Dorsolateral prefrontal cortex (tissue), 120 donors: ENCODE measurements at regions of chr10 and their contacts with region 1.

Region 1: DNA sequence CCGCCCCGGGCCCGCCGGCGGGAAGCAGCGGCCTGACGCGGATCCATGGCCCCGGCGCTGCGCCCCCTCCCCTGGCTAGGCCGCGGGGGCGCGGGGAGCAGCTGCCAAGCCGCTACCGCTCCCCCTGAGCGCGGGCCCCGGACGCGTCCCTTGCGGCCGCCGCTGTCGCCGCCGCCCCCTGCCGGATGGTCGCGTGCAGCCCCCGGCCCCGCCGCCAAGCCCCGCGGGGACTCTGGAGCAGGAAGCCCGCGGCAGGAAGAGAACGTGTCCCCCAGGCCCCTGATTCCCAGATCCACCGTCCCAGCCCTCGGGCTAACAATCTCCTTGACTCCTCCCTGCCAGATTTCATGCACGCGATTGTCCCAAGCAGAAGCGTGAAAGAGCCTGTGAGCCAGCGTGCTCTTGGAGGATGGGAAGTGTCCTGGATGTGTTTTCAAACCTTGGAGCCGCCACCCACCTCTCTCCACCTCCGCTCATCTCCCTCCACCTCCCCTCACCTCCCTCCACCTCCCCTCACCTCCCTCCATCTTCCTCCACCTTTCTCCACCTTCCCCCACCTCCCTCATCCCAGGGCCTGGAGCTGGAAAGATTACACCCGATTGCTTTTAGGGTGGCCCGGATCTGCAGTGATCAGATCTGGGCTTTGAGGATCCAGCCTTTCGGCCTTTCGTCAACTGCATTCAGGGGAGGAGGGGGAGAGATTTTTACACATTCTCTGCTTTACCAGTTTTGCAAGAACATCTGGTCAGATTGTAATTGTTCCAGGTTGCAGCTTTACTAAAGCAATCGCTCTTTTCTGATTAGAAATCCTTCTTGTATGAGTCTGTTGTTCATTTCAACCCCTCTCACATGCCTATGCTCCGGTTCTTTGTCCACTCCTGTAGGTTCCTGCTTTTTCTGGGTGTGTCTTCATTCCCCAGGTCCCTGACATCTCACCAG is 570 bp upstream of the PRTFDC1 start:
- DNase-seq: peak in 8 of 10 donors; percentile 36 to 57 (median 45)
- H3K4me3 ChIP-seq: peak overlapping the region; percentile 53 to 85 (median 73)
- H3K27ac ChIP-seq: peak overlapping the region; percentile 88 to 100 (median 98)
- H3K27me3 ChIP-seq: no peaks in the 10 kb centered on the region
- CTCF ChIP-seq: peak in 48 of 56 donors; percentile 7 to 81 (median 50)

Region 2: DNA sequence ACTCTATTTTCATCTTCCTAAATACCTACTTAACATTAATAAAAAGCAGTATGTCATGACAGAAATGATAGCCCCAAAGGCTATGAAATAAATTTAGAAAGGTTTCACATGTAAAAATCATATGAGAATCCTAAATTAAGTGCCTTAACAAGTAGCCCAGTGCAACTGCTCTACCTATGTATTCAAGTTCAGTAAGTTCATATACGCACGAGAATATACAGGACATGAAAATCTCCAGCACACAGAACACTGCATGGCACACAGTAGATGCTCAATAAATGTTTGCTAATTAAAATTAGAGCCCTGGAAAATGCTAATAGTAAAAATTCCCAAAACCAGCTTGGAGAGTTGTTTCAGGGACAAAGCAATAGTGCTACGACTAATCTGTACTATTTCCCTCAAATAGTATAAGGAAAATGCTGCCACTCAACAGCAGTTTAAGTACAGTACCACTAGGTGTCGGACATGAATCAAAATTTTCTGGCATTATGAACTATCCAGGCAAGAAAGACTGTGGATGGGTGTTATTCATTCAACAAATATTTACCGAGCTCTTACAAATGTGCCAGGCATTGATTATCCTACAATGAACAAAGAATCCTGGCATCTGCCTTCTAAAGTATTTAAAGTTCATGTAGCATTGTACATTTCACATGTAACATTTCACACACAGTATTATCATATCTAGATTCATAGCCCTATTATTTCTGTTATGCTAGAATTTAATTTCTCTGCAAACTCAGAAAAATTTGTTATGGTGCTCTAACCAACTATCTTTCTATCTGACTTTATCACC is 310.2 kb before region 1 on chr10:
- intact Hi-C with region 1: loop called (anchors 2 to 10 kb)
- DNase-seq: no peak
- H3K4me3 ChIP-seq: no peak overlapping the region
- H3K27ac ChIP-seq: peak overlapping the region in 26 of 59 donors; percentile 1 to 65 (median 24)
- H3K27me3 ChIP-seq: no peaks in the 10 kb centered on the region
- CTCF ChIP-seq: peak; percentile 49 to 88 (median 75)

Region 3: DNA sequence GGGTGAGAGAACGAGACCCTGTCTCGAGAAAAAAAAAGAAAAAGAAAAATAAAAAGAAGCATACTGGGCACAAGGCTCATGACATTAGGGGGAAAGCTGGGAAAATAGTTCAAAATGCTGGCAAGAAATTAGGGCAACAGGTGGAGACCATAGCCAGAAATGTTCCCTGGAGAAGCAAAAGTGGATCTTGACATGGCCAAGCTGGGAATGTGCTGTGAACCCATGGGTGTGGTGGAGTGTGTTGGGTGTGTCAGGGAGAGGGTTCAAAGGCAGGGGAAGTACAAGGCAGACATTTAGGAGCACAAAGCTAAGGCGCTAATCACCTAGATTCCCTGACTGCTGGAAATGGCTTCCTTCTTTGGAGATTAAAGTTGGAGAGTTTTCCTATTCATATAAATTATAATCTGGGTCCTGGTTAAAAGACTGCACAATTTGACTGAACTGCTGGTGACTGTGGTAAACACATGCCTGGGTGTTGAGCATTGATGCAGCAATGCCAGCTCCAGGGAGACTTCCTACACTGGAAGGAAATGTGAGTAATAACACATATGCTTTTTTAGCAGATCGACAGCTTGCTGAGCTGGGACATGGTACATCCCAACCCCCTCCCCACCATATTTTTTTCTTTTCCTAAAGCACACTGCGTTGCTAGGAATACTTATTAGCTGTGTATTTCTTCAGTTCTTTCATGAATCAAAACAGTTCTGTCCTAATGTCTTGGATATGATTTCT is 159.2 kb before region 1 on chr10:
- intact Hi-C with region 1: loop called in 1 of 2 experiments (anchors 5 kb)
- DNase-seq: peak in 2 of 10 donors; percentile 49 to 52
- H3K4me3 ChIP-seq: no peak overlapping the region
- H3K27ac ChIP-seq: peak overlapping the region in 53 of 59 donors; percentile 1 to 100 (median 72)
- H3K27me3 ChIP-seq: no peaks in the 10 kb centered on the region
- CTCF ChIP-seq: no peak

Region 4: DNA sequence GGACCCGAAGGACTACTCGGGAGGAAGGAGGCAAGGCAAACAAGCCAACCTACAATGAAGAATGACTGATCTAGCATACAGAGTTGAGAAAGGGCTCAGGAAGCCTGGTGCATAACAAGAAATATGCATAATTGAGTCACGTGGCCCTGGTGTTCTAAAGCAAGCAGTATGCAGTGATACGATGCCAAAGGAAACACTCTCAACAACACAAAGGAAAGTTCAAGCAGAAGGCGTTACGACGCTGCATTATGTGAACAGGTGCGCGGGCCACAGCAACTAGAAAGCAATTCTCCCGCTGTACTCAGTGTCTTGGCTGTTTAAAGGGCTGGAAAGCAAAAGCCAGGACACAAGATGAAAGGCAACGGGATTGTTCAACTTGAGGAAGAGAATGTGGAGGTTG is 101.3 kb before region 1 on chr10:
- intact Hi-C with region 1: loop called in 1 of 2 experiments (anchors 5 kb)
- DNase-seq: peak in 1 of 10 donors; percentile 36
- H3K4me3 ChIP-seq: peak overlapping the region in 24 of 59 donors; percentile 2 to 39 (median 20)
- H3K27ac ChIP-seq: peak overlapping the region in 57 of 59 donors; percentile 16 to 96 (median 87)
- H3K27me3 ChIP-seq: no peaks in the 10 kb centered on the region
- CTCF ChIP-seq: no peak

Region 5: GRCh38 chr10:24901686-24902399 is 51.1 kb before region 1 on chr10:
- intact Hi-C with region 1: loop called in 1 of 2 experiments (anchors 5 kb)
- DNase-seq: peak in 6 of 10 donors; percentile 54 to 77 (median 62)
- H3K4me3 ChIP-seq: peak overlapping the region in 6 of 59 donors; percentile 3 to 30 (median 11)
- H3K27ac ChIP-seq: peak overlapping the region; percentile 26 to 93 (median 81)
- H3K27me3 ChIP-seq: no peaks in the 10 kb centered on the region
- CTCF ChIP-seq: peak in 2 of 56 donors; percentile 9 to 15

Region 6: GRCh38 chr10:25047591-25048301 is 94.8 kb after region 1 on chr10:
- intact Hi-C with region 1: no loop called
- DNase-seq: no peak
- H3K4me3 ChIP-seq: no peak overlapping the region
- H3K27ac ChIP-seq: peak overlapping the region in 3 of 59 donors; percentile 16 to 46 (median 20)
- H3K27me3 ChIP-seq: no peaks in the 10 kb centered on the region
- CTCF ChIP-seq: no peak